Activated CD4-positive, alpha-beta T cell treated with anti-CD3 and anti-CD28 coated beads for 36 hours (primary cell): ENCODE measurements at regions of chrX and their contacts with region 1.

Region 1: DNA sequence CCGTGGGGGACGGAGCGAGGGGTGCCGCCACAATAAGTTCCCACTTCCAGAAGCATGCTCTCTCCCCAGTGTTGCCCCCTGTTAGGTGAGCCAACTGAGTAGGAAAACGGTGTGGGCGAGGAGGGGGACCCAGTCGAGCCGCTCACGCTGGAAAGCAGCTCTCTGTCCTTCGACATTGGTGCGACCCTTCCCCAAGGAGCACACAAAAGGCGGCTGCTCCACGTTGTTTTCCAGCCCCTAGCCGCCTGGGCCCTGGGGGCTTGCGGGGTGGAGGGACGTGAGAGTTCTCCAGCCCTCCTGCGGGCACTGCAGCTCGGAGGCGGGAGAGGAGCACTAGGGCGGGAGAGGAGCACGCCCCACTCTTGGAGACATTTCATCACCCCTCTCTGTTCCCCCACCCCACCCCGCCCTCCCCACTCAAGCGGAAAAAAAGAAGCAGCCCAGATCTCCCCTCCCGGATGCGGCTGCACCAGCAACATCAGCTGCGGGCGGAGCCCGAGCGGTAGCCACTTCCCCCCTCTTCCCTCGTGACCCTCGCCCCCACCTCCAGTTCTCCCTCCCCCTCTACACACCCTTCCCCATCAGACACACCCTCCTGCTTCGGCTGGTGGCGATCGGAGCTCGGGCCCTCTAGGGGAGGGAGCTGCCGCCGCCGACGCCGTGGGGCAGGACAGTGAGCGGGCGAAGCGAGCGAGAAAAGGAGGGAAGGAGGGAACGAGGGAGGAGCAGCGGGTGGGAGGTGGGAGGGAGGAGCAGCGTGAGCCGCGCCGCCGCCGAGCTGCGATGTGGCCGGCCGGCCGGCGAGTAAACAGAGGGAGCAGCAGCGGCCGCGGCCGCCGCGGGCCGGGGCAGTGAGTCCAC is at the start of gene DOCK11:
- DNase-seq: peak; percentile 90
- ATAC-seq: peak; percentile 82
- H3K4me3 Mint-ChIP-seq: peak within 1 kb of the TSS; percentile 99
- H3K27ac Mint-ChIP-seq: peak within 1 kb of the TSS; percentile 98
- H3K4me1 Mint-ChIP-seq: peaks cover 23% of the 10 kb centered on the region
- H3K27me3 Mint-ChIP-seq: no peaks in the 10 kb centered on the region
- total RNA-seq, gene DOCK11: 37.2 to 47.3 TPM

Region 2: GRCh38 chrX:118528071-118528737 is 32.9 kb after region 1 on chrX:
- CTCF ChIA-PET with region 1: no interaction called
- POLR2A ChIA-PET with region 1: interaction called, 14 read pairs
- intact Hi-C with region 1: loop called in 1 of 2 experiments (anchors 2 kb)
- DNase-seq: peak; percentile 74
- ATAC-seq: peak; percentile 67
- H3K4me3 Mint-ChIP-seq: peak overlapping the region; percentile 85
- H3K27ac Mint-ChIP-seq: peak overlapping the region; percentile 100
- H3K4me1 Mint-ChIP-seq: peaks cover 78% of the 10 kb centered on the region
- H3K27me3 Mint-ChIP-seq: no peaks in the 10 kb centered on the region

Region 3: DNA sequence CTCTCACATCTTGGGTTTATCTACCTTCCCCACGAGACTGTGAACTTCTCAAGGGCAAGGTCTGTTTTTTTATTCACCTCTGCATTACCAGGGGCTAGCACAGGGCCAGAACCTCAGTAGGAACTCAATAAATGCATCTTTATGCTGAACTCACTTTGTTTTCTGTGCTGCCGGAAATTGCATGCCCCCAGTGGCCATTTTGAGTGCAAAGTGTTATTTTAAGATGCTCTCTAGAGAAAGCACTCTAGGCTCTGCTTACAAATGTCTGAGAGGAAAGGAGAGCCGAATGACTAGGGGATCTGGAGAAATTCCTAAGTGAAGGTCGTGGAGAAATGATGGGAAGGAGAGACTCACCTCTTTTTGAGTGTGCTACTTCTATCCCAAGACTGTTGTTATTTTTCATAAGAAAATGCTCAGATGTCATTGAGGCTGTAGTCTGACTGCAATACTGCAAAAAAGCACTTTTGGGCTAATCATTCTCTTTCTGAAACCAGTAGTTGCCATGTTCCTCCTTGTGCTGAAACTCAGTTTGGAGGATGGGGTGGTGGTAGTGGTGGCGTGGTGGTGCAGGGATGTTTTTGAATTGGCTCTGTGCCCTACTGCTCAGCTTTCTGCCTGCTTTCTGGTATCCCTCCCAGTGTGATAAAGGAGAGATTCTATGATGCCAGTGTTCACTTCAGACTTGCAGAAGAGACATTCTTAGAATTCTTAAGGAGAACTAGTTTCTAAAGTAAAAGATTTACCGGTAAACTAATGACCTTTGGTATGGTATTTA is 41.6 kb after region 1 on chrX:
- CTCF ChIA-PET with region 1: interaction called, 3 read pairs
- POLR2A ChIA-PET with region 1: no interaction called
- intact Hi-C with region 1: loop called (anchors 1 to 2 kb)
- DNase-seq: peak; percentile 64
- ATAC-seq: peak; percentile 50
- H3K4me3 Mint-ChIP-seq: peak overlapping the region; percentile 46
- H3K27ac Mint-ChIP-seq: peak overlapping the region; percentile 96
- H3K4me1 Mint-ChIP-seq: peaks cover 70% of the 10 kb centered on the region
- H3K27me3 Mint-ChIP-seq: no peaks in the 10 kb centered on the region

Region 4: GRCh38 chrX:118603981-118604380 is 108.7 kb after region 1 on chrX:
- CTCF ChIA-PET with region 1: interaction called, 5 read pairs
- POLR2A ChIA-PET with region 1: no interaction called
- intact Hi-C with region 1: loop called in 1 of 2 experiments (anchors 5 kb)
- DNase-seq: peak; percentile 38
- ATAC-seq: peak; percentile 64
- H3K4me3 Mint-ChIP-seq: no peak overlapping the region
- H3K27ac Mint-ChIP-seq: no peak overlapping the region
- H3K4me1 Mint-ChIP-seq: peaks cover 17% of the 10 kb centered on the region
- H3K27me3 Mint-ChIP-seq: no peaks in the 10 kb centered on the region